SK-N-SH (cell line): ENCODE measurements at regions of chr10 and their contacts with region 1.

Region 1: DNA sequence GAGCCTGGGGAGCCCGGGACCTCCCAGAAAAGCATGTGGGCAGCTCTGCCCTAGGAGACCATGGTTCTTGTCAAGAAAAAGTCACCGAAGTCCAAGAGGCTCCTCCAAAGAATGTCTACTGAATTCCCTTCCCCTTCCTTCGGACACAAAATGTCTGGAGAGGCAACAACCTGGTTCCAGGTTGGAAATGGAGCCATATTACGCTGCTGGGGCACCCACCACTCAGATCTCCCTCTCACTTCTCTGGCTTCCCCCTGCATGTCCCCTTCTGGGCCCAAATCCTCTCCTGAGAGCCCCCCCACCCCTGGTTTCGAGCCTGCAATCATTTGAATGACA is 52.6 kb downstream of the RGS10 start:
- DNase-seq: no peak
- H3K4me3 ChIP-seq: no peak overlapping the region
- H3K27ac ChIP-seq: no peak overlapping the region
- H3K4me1 ChIP-seq: no peaks in the 10 kb centered on the region; a peak in 1 of 4 replicates
- H3K27me3 ChIP-seq: no peaks in the 10 kb centered on the region
- CTCF ChIP-seq: no peak; the same call in 1 of the 2 replicates
- EP300 ChIP-seq: no peak
- RAD21 ChIP-seq: no peak

Region 2: GRCh38 chr10:119421887-119422681 is 67.9 kb before region 1 on chr10:
- CTCF ChIA-PET with region 1: interaction called, 11 read pairs
- POLR2A ChIA-PET with region 1: no interaction called
- DNase-seq: peak; percentile 91
- H3K4me3 ChIP-seq: no peak overlapping the region
- H3K27ac ChIP-seq: peak overlapping the region in 1 of 2 experiments; percentile 53; a peak in 2 of 4 replicates
- H3K4me1 ChIP-seq: peaks cover 0 to 40% of the 10 kb centered on the region in 2 experiments; a peak in 1 of 4 replicates
- H3K27me3 ChIP-seq: no peaks in the 10 kb centered on the region
- CTCF ChIP-seq: no peak
- EP300 ChIP-seq: peak in 1 of 2 experiments; percentile 56; a peak in 1 of 4 replicates
- RAD21 ChIP-seq: no peak

Region 3: GRCh38 chr10:119461380-119461779 is 28.6 kb before region 1 on chr10:
- CTCF ChIA-PET with region 1: interaction called, 27 read pairs
- POLR2A ChIA-PET with region 1: no interaction called
- DNase-seq: no peak
- H3K4me3 ChIP-seq: no peak overlapping the region
- H3K27ac ChIP-seq: no peak overlapping the region
- H3K4me1 ChIP-seq: no peaks in the 10 kb centered on the region
- H3K27me3 ChIP-seq: no peaks in the 10 kb centered on the region; the same call in 1 of the 2 replicates
- CTCF ChIP-seq: no peak
- EP300 ChIP-seq: no peak
- RAD21 ChIP-seq: no peak

Region 4: DNA sequence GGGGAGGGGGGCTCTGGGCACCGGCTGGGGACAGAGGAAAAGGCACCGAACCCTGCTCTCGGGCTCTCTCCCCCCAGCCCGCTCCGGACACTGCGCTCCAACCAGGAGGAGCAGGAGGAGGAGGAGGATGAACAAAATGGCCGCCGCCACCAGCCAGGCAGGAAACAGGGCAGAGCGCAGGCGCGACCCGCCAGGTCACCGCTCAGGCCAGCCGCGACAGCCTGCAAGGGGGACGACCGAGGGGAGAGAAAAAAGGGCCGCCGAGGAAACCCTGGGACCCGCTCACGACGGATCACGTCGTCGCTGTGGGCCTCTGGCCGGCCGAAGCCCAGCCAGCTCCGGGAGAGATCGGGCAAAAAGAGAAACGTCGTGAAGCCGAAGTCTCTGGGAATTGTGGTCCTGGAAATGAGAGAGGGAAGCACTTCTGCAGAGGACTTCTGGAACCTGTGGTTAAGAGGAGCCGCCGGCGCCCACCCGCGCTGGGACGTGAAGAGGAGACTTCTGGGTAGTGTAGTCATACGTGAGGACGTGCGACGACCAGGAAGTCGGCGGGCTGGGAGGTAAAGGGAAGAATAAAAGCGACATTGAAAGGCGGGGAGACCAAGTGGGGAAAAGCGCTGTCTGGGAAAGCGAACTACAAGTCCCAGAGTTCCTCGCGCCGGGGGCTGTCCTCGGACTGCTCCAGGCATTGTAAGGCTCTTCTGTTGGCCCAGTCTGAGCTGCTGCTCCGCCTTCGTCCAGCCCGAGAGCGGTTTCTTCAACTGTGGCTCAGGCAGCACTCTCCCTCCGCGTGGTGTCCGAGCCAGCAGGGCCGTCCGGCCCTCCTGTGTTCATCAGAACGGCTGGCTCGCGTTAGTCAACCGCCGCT is 106.8 kb after region 1 on chr10 and contains the start of gene TIAL1:
- CTCF ChIA-PET with region 1: no interaction called
- POLR2A ChIA-PET with region 1: no interaction called
- DNase-seq: peak; percentile 89
- H3K4me3 ChIP-seq: peak within 1 kb of the TSS; percentile 96
- H3K27ac ChIP-seq: peak within 1 kb of the TSS; percentile 99
- H3K4me1 ChIP-seq: peaks cover 31% of the 10 kb centered on the region in 2 experiments
- H3K27me3 ChIP-seq: no peaks in the 10 kb centered on the region
- CTCF ChIP-seq: no peak
- EP300 ChIP-seq: no peak
- RAD21 ChIP-seq: no peak
- polyA plus RNA-seq, gene TIAL1: 58.0 and 70.6 TPM in 2 replicates